T-cell (primary cell): ENCODE measurements at regions of chr14 and their contacts with region 1.

Region 1: GRCh38 chr14:58280954-58281787 is 17.2 kb upstream of the ARID4A start:
- DNase-seq: peak in 18 of 35 experiments; percentile 9 to 55 (median 18)
- ATAC-seq: peak; percentile 75 to 84 (median 82)
- H3K4me3 ChIP-seq: no peak overlapping the region
- H3K4me3 Mint-ChIP-seq: peak overlapping the region; percentile 49 to 63 (median 55)
- H3K27ac ChIP-seq: peak overlapping the region; percentile 61
- H3K27ac Mint-ChIP-seq: peak overlapping the region; percentile 89 to 90
- H3K4me1 ChIP-seq: peaks cover 24 to 29% of the 10 kb centered on the region in 2 experiments
- H3K4me1 Mint-ChIP-seq: peaks cover 68 to 78% (median 73%) of the 10 kb centered on the region in 3 donors
- H3K27me3 ChIP-seq: no peaks in the 10 kb centered on the region
- H3K27me3 Mint-ChIP-seq: no peaks in the 10 kb centered on the region

Region 2: GRCh38 chr14:57732463-57733285 is 548.5 kb before region 1 on chr14:
- CTCF ChIA-PET with region 1: no interaction called
- POLR2A ChIA-PET with region 1: no interaction called
- DNase-seq: no peak
- ATAC-seq: no peak
- H3K4me3 ChIP-seq: no peak overlapping the region
- H3K4me3 Mint-ChIP-seq: no peak overlapping the region
- H3K27ac ChIP-seq: no peak overlapping the region
- H3K27ac Mint-ChIP-seq: no peak overlapping the region
- H3K4me1 ChIP-seq: no peaks in the 10 kb centered on the region
- H3K4me1 Mint-ChIP-seq: no peaks in the 10 kb centered on the region
- H3K27me3 ChIP-seq: no peaks in the 10 kb centered on the region
- H3K27me3 Mint-ChIP-seq: peaks cover 6 to 7% of the 10 kb centered on the region in 2 donors

Region 3: DNA sequence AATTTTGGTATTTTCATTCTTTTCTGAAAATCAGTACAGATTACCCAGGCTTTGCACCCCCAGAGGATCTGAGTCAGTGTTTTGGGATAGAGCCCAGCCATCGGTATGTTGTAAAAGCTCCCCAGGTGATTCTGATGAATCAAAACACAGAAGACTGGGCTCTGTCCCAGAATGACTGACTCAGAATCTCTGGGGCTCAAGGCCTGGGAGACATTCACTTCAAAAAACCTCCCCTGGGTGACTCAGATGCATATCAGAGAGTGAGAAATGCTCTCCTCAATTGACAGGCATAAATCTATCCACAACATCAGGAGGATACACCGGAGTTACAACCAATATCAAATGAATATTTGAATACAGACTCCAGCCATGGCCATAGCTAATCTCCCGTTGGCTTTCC is 447.8 kb before region 1 on chr14:
- CTCF ChIA-PET with region 1: no interaction called
- POLR2A ChIA-PET with region 1: no interaction called
- DNase-seq: no peak
- ATAC-seq: no peak
- H3K4me3 ChIP-seq: no peak overlapping the region
- H3K4me3 Mint-ChIP-seq: no peak overlapping the region
- H3K27ac ChIP-seq: no peak overlapping the region
- H3K27ac Mint-ChIP-seq: no peak overlapping the region
- H3K4me1 ChIP-seq: no peaks in the 10 kb centered on the region
- H3K4me1 Mint-ChIP-seq: no peaks in the 10 kb centered on the region
- H3K27me3 ChIP-seq: no peaks in the 10 kb centered on the region
- H3K27me3 Mint-ChIP-seq: peaks cover 0 to 18% of the 10 kb centered on the region in 2 donors

Region 4: GRCh38 chr14:58249621-58250020 is 31.6 kb before region 1 on chr14:
- CTCF ChIA-PET with region 1: no interaction called
- POLR2A ChIA-PET with region 1: no interaction called
- DNase-seq: no peak
- ATAC-seq: no peak
- H3K4me3 ChIP-seq: no peak overlapping the region
- H3K4me3 Mint-ChIP-seq: no peak overlapping the region
- H3K27ac ChIP-seq: no peak overlapping the region
- H3K27ac Mint-ChIP-seq: no peak overlapping the region
- H3K4me1 ChIP-seq: peaks cover 12 to 18% of the 10 kb centered on the region in 2 experiments
- H3K4me1 Mint-ChIP-seq: peaks cover 44 to 49% (median 48%) of the 10 kb centered on the region in 3 donors
- H3K27me3 ChIP-seq: no peaks in the 10 kb centered on the region
- H3K27me3 Mint-ChIP-seq: no peaks in the 10 kb centered on the region

Region 5: GRCh38 chr14:58315606-58316005 is 34.4 kb after region 1 on chr14:
- CTCF ChIA-PET with region 1: interaction called in 1 of 2 experiments, 3 read pairs
- POLR2A ChIA-PET with region 1: interaction called in 1 of 2 experiments, 11 read pairs
- DNase-seq: no peak
- ATAC-seq: no peak
- H3K4me3 ChIP-seq: no peak overlapping the region
- H3K4me3 Mint-ChIP-seq: no peak overlapping the region
- H3K27ac ChIP-seq: no peak overlapping the region
- H3K27ac Mint-ChIP-seq: peak overlapping the region in 1 of 2 donors; percentile 54
- H3K4me1 ChIP-seq: no peaks in the 10 kb centered on the region
- H3K4me1 Mint-ChIP-seq: peaks cover 4 to 8% (median 6%) of the 10 kb centered on the region in 3 donors
- H3K27me3 ChIP-seq: no peaks in the 10 kb centered on the region
- H3K27me3 Mint-ChIP-seq: no peaks in the 10 kb centered on the region

Region 6: GRCh38 chr14:58331111-58331510 is 49.9 kb after region 1 on chr14:
- CTCF ChIA-PET with region 1: no interaction called
- POLR2A ChIA-PET with region 1: interaction called in 1 of 2 experiments, 11 read pairs
- DNase-seq: peak; percentile 69 to 99 (median 90)
- ATAC-seq: peak; percentile 95 to 97 (median 96)
- H3K4me3 ChIP-seq: no peak overlapping the region
- H3K4me3 Mint-ChIP-seq: peak overlapping the region; percentile 41 to 69 (median 52)
- H3K27ac ChIP-seq: peak overlapping the region; percentile 76
- H3K27ac Mint-ChIP-seq: peak overlapping the region; percentile 89 to 93
- H3K4me1 ChIP-seq: peaks cover 2 to 11% of the 10 kb centered on the region in 2 experiments
- H3K4me1 Mint-ChIP-seq: peaks cover 11 to 35% (median 27%) of the 10 kb centered on the region in 3 donors
- H3K27me3 ChIP-seq: no peaks in the 10 kb centered on the region
- H3K27me3 Mint-ChIP-seq: no peaks in the 10 kb centered on the region